ENCODE measurements at regions of chr3 and their contacts with region 1.

Region 1: GRCh38 chr3:111978493-111979433 is at the start of gene ABHD10:
- DNase-seq: peak; percentile 98
- ATAC-seq: peak; percentile 97
- H3K4me3 Mint-ChIP-seq: peak within 1 kb of the TSS; percentile 87
- H3K27ac Mint-ChIP-seq: peak within 1 kb of the TSS; percentile 93
- H3K4me1 Mint-ChIP-seq: peaks cover 40% of the 10 kb centered on the region
- H3K27me3 Mint-ChIP-seq: no peaks in the 10 kb centered on the region
- total RNA-seq, gene ABHD10: 58.7 to 64.1 TPM

Region 2: GRCh38 chr3:111277226-111277625 is 701.5 kb before region 1 on chr3:
- CTCF ChIA-PET with region 1: no interaction called
- POLR2A ChIA-PET with region 1: no interaction called
- intact Hi-C with region 1: no loop called
- DNase-seq: no peak
- ATAC-seq: no peak
- H3K4me3 Mint-ChIP-seq: no peak overlapping the region
- H3K27ac Mint-ChIP-seq: no peak overlapping the region
- H3K4me1 Mint-ChIP-seq: peaks cover 15% of the 10 kb centered on the region
- H3K27me3 Mint-ChIP-seq: no peaks in the 10 kb centered on the region

Region 3: DNA sequence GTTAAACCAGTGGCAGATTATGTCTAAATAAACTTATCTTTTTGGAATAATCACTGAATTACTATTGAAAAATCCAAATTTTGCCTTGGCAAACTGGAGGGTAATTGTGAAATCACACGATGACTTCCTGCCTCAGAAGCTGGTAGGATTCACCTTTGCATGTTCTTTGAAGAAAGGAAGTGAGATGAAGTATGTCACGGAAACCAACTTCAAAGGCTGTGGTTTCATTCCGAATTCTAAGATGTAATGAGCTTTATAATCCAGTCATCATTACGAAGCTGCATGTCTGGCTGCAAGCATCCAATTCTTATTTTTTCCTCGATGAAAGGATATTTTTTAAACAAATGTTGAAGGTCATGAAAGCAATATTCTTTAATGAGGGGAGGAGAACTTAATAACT is 368.6 kb before region 1 on chr3:
- CTCF ChIA-PET with region 1: no interaction called
- POLR2A ChIA-PET with region 1: interaction called, 4 read pairs
- intact Hi-C with region 1: loop called in 1 of 2 experiments (anchors 5 kb)
- DNase-seq: peak; percentile 53
- ATAC-seq: peak; percentile 56
- H3K4me3 Mint-ChIP-seq: peak overlapping the region; percentile 62
- H3K27ac Mint-ChIP-seq: peak overlapping the region; percentile 98
- H3K4me1 Mint-ChIP-seq: peaks cover 98% of the 10 kb centered on the region
- H3K27me3 Mint-ChIP-seq: no peaks in the 10 kb centered on the region

Region 4: GRCh38 chr3:111989061-111989678 is 10.4 kb after region 1 on chr3:
- CTCF ChIA-PET with region 1: interaction called, 17 read pairs
- POLR2A ChIA-PET with region 1: interaction called, 3 read pairs
- intact Hi-C with region 1: no loop called
- DNase-seq: no peak
- ATAC-seq: peak; percentile 69
- H3K4me3 Mint-ChIP-seq: no peak overlapping the region
- H3K27ac Mint-ChIP-seq: no peak overlapping the region
- H3K4me1 Mint-ChIP-seq: peaks cover 36% of the 10 kb centered on the region
- H3K27me3 Mint-ChIP-seq: no peaks in the 10 kb centered on the region

Region 5: GRCh38 chr3:111998636-111999483 is 20.1 kb after region 1 on chr3 and contains the start of gene TAGLN3:
- CTCF ChIA-PET with region 1: interaction called, 8 read pairs
- POLR2A ChIA-PET with region 1: interaction called, 4 read pairs
- intact Hi-C with region 1: loop called (anchors 1 kb)
- DNase-seq: peak; percentile 47
- ATAC-seq: peak; percentile 14
- H3K4me3 Mint-ChIP-seq: peak within 1 kb of the TSS; percentile 69
- H3K27ac Mint-ChIP-seq: peak within 1 kb of the TSS; percentile 44
- H3K4me1 Mint-ChIP-seq: peaks cover 47% of the 10 kb centered on the region
- H3K27me3 Mint-ChIP-seq: no peaks in the 10 kb centered on the region
- total RNA-seq, gene TAGLN3: 3.2 to 3.5 TPM

Region 6: DNA sequence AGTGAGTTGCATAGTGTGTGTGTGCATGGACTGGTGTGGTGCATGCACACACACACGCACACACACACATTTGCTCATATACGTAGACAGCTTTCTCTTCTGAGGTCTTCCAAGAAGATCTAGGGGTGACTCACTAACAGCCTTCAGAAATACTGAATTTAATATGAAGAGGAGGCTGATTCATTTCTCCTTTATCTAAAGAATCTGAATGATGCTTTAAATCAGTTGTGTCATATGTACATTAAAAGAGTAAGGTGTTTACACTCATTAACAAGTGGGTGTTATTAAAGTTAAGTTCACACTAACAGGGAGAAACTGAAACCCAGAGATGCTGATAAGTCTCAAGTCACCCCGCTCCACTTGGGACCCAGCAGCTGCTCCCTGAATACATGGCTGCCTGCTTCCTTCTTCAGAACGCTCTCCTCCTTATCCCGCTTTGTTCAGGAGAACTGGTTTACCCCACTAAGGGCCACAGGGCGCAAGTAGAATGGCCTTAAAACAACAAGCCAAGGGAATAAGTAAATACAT is 77.8 kb after region 1 on chr3:
- CTCF ChIA-PET with region 1: interaction called, 3 read pairs
- POLR2A ChIA-PET with region 1: no interaction called
- intact Hi-C with region 1: loop called in 1 of 2 experiments (anchors 5 kb)
- DNase-seq: peak; percentile 52
- ATAC-seq: peak; percentile 98
- H3K4me3 Mint-ChIP-seq: no peak overlapping the region
- H3K27ac Mint-ChIP-seq: peak overlapping the region; percentile 80
- H3K4me1 Mint-ChIP-seq: peaks cover 21% of the 10 kb centered on the region
- H3K27me3 Mint-ChIP-seq: peaks cover 4% of the 10 kb centered on the region

Region 7: GRCh38 chr3:112149136-112149535 is 170.4 kb after region 1 on chr3:
- CTCF ChIA-PET with region 1: no interaction called
- POLR2A ChIA-PET with region 1: no interaction called
- intact Hi-C with region 1: no loop called
- DNase-seq: no peak
- ATAC-seq: no peak
- H3K4me3 Mint-ChIP-seq: no peak overlapping the region
- H3K27ac Mint-ChIP-seq: no peak overlapping the region
- H3K4me1 Mint-ChIP-seq: peaks cover under 1% of the 10 kb centered on the region
- H3K27me3 Mint-ChIP-seq: no peaks in the 10 kb centered on the region